Right cardiac atrium (tissue), 5 donors: ENCODE measurements at regions of chrX and their contacts with region 1.

Region 1: DNA sequence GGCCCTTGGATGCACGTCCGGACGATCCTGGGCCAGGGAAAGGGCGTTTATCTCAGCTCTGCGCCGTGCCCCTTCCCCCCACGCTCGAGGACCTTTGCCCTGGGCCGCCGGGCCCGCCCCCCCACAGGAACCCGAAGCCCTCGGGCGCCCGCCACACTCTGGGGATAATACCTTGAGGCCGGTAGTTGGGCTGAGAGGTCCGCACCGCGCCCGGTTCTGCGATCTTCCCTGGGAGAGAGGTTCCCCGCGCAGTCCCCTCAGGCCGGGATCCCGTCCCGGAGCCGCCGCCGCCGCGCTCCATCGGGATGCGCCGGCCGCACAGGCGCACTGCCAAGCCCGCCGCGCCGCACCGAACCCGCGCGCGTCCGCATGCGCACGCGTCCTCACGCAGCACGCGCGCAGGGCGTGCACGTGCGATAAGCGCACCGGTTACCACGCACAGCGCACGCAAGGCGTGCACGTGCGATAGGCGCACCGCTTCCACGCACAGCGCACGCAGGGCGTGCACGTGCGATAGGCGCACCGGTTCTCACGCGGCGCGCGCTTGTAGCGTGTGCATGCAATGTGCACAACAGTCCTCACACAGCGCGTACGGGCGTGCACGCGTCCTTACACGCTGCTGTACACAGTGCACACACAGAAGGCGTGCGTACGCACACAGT is at the start of gene MAP7D2:
- DNase-seq: peak in 1 of 3 donors; percentile 55
- ATAC-seq: peak in 1 of 2 donors; percentile 48
- H3K4me3 ChIP-seq: peak within 1 kb of the TSS; percentile 47
- H3K27ac ChIP-seq: no peak within 1 kb of the TSS
- H3K4me1 ChIP-seq: peaks cover 5% of the 10 kb centered on the region
- H3K27me3 ChIP-seq: no peaks in the 10 kb centered on the region
- total RNA-seq, gene MAP7D2: 0.29 to 1.0 (median 0.66) TPM

Region 2: DNA sequence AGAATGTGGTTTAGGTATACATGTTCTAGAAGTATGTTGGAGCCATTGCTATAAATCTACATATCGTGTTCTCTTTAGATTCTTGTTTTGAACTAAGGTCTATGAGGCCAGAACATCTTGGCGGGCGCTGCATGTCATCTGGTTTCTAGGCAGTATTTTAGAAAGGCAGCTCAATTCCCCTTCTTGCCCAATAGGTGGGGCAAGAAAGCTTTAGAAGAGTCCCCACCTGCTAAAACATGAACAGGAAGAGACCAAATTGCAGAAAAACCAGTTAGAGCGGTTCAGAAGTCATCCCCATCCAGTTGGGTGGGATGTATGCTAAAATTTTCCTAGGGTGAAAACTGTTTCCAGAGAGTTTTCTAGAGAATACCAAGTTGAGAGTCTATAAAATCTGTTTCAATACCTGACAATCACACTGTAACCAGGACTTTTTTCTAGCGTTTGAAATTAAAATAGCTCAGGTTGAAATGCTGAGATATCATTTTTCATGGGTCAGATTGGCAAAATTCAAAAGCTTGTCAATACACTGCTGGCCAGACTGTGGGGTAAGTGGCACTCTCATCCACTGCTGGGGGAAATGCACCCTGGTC is 211.8 kb before region 1 on chrX:
- intact Hi-C with region 1: loop called in 1 of 4 experiments (anchors 10 kb)
- DNase-seq: peak in 2 of 3 donors; percentile 15 to 63
- ATAC-seq: peak; percentile 50 to 54
- H3K4me3 ChIP-seq: no peak overlapping the region
- H3K27ac ChIP-seq: no peak overlapping the region
- H3K4me1 ChIP-seq: no peaks in the 10 kb centered on the region
- H3K27me3 ChIP-seq: no peaks in the 10 kb centered on the region